ENCODE measurements at regions of chr19 and their contacts with region 1.

Region 1: DNA sequence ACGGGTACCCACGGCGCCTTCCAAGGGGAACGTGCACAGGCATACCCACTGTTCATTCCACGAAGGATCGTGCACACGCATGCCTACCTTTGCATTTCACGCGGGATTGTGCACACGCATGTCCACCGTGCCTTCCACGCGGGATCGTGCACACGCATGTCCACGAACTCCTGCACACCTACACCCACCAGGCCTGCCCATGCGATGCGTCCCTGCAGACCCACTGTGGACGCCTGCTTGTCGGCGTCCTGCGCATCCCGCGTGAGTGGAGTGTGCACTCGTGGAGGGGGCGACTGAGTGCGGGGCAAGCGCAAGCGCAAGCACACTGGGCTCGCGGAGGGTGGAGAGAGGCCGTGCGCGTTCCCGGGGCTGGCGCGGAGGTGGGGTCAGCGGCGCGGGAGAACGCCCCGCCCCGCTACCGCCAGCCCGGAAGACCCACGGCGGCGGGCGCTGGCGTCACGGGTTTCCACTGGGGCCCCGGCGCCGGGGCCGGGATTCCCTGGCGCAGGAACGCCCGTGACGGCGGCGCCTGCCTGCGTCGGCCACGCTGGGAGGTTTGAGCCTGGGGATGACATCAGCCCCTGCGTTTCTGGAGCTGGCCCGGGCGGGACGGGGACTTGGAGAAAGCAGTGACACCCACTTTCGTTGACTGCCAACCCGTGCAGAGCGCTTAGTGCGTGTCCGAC is 18.7 kb downstream of the GADD45B start:
- DNase-seq: peak; percentile 91
- ATAC-seq: peak; percentile 84 to 86

Region 2: GRCh38 chr19:2168619-2169424 is 325.8 kb before region 1 on chr19:
- intact Hi-C with region 1: no loop called
- DNase-seq: peak; percentile 97
- ATAC-seq: peak; percentile 86 to 90

Region 3: DNA sequence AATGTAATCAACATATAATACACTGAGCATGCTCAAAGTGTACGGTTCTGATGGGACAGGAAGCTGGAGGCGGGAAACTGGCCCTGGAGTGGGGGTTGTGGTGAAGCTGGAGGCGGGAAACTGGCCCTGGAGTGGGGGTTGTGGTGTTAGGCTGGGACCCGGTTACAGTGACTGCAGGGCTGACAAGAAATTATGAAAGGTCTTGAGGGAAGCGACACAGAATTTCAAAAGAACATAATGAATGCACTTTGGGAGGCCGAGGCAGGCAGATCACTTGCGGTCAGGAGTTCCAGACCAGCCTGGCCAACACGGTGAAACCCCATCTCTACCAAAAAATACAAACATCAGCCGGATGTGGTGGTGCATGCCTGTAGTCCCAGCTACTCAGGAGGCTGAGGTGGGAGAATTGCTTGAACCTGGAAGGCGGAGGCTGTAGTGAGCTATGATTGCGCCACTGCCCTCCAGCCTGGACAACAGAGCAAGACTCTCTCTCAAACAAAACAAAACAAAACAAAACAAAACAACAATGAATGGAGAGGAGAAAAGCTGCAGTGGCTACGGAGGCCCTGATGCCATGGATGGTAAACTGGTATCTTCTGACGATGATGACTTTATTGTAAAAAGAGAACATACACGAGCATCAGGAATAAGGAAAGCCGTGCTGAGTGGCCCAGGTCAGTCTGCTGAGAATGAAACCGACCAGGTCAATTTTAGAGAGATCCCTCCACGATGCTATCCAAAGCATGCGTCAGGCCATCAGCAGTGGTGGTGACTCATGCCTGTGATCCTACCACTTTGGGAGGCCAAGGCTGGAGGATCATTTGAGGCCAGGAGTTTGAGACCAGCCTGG is 43.2 kb after region 1 on chr19:
- intact Hi-C with region 1: loop called (anchors 5 kb)
- DNase-seq: no peak
- ATAC-seq: no peak

Measured in left cardiac atrium (tissue), 4 donors.